Dorsolateral prefrontal cortex (tissue), 120 donors: ENCODE measurements at regions of chr10 and their contacts with region 1.

Region 1: GRCh38 chr10:20110125-20111100 is 294.2 kb downstream of the PLXDC2 start:
- DNase-seq: peak in 9 of 10 donors; percentile 22 to 53 (median 51)
- H3K4me3 ChIP-seq: peak overlapping the region in 55 of 59 donors; percentile 0 to 63 (median 40)
- H3K27ac ChIP-seq: peak overlapping the region in 53 of 59 donors; percentile 2 to 86 (median 60)
- H3K27me3 ChIP-seq: no peaks in the 10 kb centered on the region
- CTCF ChIP-seq: peak in 13 of 56 donors; percentile 8 to 45 (median 25)

Region 2: DNA sequence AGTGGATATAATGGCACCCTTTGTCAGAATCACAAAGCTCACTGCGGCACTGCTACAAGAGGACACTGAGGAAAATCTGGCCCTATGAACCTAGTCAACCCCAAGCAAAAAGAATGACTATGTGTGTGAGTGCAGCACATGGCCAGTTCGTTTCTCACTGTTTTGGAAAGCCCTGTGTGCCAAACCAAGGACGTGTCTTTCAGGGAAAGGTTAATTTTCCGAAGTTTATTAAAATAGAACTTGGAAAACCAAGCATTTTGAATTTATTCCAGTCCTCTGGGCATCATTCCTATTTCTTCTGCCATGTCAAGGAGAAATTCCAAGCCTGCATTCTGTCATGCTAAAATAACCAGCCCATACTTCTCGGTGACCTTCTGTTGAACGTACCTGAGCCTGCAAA is 177.6 kb after region 1 on chr10:
- intact Hi-C with region 1: loop called in 1 of 2 experiments (anchors 10 kb)
- DNase-seq: peak in 3 of 10 donors; percentile 21 to 54 (median 49)
- H3K4me3 ChIP-seq: peak overlapping the region in 14 of 59 donors; percentile 2 to 40 (median 12)
- H3K27ac ChIP-seq: peak overlapping the region in 37 of 59 donors; percentile 10 to 82 (median 64)
- H3K27me3 ChIP-seq: no peaks in the 10 kb centered on the region
- CTCF ChIP-seq: peak in 1 of 56 donors; percentile 11